Left cardiac atrium (tissue), 4 donors: ENCODE measurements at regions of chr16 and their contacts with region 1.

Region 1: GRCh38 chr16:55543472-55543871 is 23.0 kb upstream of the CAPNS2 start:
- DNase-seq: no peak
- ATAC-seq: peak; percentile 41 to 47

Region 2: DNA sequence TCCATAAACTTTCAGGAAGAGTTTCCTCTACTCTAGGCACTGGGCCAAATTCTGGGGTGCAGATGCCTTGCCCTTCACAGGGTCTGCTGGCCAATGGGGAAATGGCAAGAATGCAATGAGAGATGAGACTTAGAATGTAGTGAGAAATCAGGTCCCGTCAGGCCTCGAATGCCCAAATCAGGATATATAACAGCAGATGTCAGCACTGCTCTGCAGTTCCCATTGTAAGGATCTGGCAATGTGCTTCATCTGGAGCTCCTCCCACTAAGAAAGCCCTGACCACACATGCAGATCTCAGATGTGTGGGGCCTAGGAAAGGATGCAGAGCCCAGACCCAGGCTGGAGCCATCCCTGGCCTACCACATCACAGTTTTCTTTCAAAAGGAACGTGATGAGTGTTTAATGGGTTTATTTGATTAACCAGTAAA is 48.5 kb before region 1 on chr16:
- intact Hi-C with region 1: loop called in 1 of 2 experiments (anchors 10 kb)
- DNase-seq: no peak
- ATAC-seq: peak; percentile 81 to 83

Region 3: DNA sequence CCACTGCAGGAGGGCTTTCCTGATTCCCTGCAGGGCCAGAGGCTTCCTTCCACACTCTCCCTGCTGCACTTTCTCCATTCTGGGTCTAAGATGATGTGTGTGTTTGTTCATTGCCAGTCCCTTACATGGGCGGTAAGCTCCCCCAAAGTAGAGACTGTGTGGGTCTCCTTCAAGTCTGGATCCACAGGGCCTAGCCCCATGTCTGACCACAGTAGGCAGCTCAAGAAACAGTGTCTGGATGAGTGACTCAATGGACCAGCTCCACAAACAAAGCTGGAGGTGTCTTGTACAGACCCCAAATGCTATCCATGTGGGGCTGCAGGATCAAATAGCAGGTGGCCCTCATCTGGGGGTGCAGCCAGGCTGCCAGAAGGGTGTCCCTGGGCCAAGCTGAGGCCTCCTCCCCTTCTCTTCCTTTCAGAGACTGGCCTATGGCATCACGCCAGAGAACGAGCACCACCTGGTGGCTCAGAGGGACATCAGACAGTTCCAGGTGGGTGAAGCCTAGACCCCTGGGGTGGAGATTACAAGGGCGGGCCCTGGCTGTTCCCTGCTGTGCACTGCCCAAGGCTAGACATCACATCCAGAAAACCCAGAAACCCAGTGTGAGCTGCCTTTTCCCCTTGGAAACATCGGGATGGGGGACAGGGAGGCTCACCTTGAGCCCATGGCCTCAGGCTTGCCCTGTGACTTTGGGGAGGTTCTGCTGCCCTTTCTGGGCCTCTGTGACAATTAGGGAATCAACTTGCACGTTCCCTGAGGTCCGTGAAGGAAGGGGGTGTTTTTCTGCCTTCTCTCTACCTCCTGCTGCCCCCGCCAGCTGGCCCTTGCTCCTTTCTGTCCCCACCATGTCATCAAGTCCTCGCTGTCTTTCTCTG is 158.2 kb after region 1 on chr16:
- intact Hi-C with region 1: loop called (anchors 5 to 10 kb)
- DNase-seq: peak; percentile 61
- ATAC-seq: peak; percentile 53 to 73

Region 4: GRCh38 chr16:55773859-55774549 is 230.5 kb after region 1 on chr16:
- intact Hi-C with region 1: no loop called
- DNase-seq: no peak
- ATAC-seq: no peak